Gastrocnemius medialis (tissue), 4 donors: ENCODE measurements at regions of chr3 and their contacts with region 1.

Region 1: DNA sequence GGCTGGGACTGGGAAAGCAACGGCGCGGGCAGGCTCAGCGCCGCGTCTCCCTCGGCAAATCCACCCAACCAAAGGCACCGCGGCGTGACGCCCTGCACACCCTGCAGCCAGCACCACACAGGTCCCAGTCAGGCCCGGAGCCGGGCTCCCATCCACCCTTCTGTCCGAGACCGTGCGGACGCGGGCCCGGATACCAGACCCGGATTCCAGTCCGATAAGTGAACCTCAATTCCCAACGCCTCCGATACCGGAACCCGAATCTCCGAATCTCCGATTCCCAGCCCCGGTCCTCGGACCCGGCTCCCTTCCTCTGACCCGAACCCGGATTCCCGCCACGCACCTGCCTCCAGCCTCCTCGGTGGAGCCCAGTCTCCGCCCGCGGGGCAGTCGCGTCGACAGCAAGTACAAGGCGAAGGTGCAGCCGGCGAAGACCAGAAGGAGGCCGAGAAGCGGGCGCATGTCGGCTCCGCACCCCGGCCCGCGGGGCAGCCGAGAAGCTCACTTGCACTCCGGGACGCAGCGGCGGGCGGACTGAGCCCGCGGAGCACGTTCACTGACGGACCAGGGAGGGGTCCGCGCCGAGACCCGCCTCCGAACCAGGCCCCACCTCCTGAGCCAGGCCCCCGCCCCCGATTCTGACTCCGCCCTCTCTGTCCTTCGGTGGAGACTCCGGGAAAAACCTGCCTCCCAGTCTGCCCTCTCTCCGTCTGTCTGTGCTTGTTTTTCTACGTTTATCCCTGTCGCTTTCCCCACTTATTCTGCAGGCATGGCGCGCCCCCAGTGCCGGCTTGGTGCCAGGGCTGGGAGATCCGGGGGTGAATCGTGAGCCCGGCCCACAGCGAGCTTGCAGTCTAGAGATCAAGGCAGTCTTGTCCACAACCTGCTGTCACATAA is at the start of gene TMEM41A:
- DNase-seq: peak; percentile 83 to 89
- ATAC-seq: peak; percentile 92
- H3K4me3 ChIP-seq: peak within 1 kb of the TSS; percentile 74 to 96 (median 90)
- H3K27ac ChIP-seq: peak within 1 kb of the TSS; percentile 80 to 89 (median 84)
- H3K4me1 ChIP-seq: peaks cover 16% of the 10 kb centered on the region in 2 donors
- H3K27me3 ChIP-seq: no peaks in the 10 kb centered on the region
- CTCF ChIP-seq: no peak
- POLR2A ChIP-seq: peak; percentile 73 to 89
- total RNA-seq, gene TMEM41A: 4.8 to 11.5 (median 6.5) TPM

Region 2: DNA sequence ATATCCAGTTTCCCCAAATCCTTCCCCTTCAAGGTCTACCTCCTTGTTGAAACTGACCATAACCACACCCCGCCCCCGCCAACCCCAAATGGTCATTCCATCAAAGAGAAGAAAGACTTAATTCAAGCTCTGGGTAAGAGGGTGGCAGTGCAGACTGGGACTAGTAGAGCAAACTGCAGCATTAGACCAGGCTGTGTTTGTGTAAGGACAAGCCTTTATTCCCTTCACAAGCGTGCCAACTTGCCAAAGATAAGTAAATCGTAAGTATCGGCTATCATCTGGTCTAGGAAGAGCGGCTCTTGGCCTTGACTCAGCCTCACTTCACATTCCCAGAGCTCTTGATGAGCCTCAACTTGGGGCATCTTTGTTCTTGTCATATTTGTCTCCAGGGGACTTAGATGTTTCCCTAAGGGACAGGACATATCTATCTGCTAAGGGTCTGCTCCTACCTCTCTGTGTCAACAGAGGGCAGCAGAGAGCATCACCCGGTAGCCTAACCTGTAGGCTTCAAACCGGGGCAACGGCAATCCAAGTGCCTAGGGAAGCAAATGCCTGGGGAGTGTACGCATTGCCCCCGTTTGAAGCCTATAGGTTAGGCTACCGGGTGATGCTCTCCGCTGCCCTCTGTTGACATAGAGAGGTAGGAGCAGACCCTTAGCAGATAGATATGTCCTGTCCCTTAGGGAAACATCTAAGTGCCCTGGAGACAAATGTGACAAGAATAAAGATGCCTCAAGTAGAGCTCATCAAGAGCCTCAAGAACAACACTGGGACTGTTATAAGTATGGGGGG is 144.7 kb before region 1 on chr3:
- in situ Hi-C with region 1: no loop called
- intact Hi-C with region 1: loop called (anchors 2 kb)
- DNase-seq: peak; percentile 12 to 48
- ATAC-seq: peak; percentile 80 to 85
- H3K4me3 ChIP-seq: no peak overlapping the region
- H3K27ac ChIP-seq: no peak overlapping the region
- H3K4me1 ChIP-seq: no peaks in the 10 kb centered on the region
- H3K27me3 ChIP-seq: no peaks in the 10 kb centered on the region
- CTCF ChIP-seq: peak; percentile 21 to 76 (median 56)
- POLR2A ChIP-seq: no peak

Region 3: DNA sequence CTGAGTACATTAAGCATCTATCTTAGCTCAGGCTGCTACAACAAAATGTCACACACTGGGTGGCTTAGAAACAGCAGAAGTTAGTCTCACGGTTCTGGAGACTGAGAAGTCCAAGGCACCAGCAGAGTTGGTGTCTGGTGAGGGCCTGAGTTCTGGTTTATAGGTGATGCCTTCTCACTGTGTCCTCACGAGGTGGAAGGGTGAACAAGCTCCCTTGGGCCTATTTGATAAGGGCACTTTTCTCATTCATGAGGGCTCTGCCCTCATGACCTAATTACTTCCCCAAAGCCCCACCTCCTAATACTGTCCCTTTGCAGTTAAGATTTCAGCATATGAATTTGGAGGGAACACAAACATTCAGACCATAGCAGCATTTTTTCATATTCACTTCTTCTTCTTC is 41.4 kb before region 1 on chr3:
- in situ Hi-C with region 1: no loop called
- intact Hi-C with region 1: no loop called
- DNase-seq: no peak
- ATAC-seq: no peak
- H3K4me3 ChIP-seq: no peak overlapping the region
- H3K27ac ChIP-seq: no peak overlapping the region
- H3K4me1 ChIP-seq: no peaks in the 10 kb centered on the region
- H3K27me3 ChIP-seq: no peaks in the 10 kb centered on the region
- CTCF ChIP-seq: no peak
- POLR2A ChIP-seq: no peak

Region 4: GRCh38 chr3:185585859-185586685 is 87.3 kb after region 1 on chr3 and contains the start of gene SENP2:
- in situ Hi-C with region 1: loop called in 1 of 4 experiments (anchors 10 kb)
- intact Hi-C with region 1: loop called (anchors 2 kb)
- DNase-seq: peak; percentile 99
- ATAC-seq: peak; percentile 99
- H3K4me3 ChIP-seq: peak within 1 kb of the TSS; percentile 79 to 98 (median 89)
- H3K27ac ChIP-seq: peak within 1 kb of the TSS; percentile 93 to 95 (median 94)
- H3K4me1 ChIP-seq: peaks cover 14 to 25% of the 10 kb centered on the region in 2 donors
- H3K27me3 ChIP-seq: no peaks in the 10 kb centered on the region
- CTCF ChIP-seq: no peak
- POLR2A ChIP-seq: peak; percentile 77 to 80
- total RNA-seq, gene SENP2: 18.6 to 34.9 (median 31.3) TPM